Astrocyte of the cerebellum (primary cell): ENCODE measurements at regions of chr17 and their contacts with region 1.

Region 1: GRCh38 chr17:28788100-28788499 is 44.3 kb downstream of the TRAF4 start:
- DNase-seq: no peak
- H3K4me3 ChIP-seq: no peak overlapping the region
- CTCF ChIP-seq: no peak

Region 2: DNA sequence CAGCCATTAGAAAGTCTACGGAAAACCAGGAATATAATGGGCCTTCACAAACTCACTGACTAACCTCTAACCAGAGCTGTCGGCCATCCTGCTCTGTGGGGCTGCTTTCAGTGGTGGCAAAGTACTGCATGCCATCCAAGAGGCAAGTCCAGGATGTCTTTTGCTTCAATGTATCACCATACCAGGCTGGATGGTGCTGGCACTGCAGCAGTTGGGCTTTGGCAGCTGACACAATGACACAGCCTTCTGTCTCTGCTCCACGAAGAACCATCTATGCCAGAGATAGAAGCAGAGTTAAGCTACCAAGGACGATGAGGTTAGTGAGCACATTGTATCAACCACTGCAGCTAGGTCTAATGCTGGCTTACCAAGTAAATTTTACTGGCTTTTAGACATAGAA is 164.4 kb before region 1 on chr17:
- in situ Hi-C with region 1: no loop called
- DNase-seq: no peak
- H3K4me3 ChIP-seq: no peak overlapping the region
- CTCF ChIP-seq: no peak

Region 3: DNA sequence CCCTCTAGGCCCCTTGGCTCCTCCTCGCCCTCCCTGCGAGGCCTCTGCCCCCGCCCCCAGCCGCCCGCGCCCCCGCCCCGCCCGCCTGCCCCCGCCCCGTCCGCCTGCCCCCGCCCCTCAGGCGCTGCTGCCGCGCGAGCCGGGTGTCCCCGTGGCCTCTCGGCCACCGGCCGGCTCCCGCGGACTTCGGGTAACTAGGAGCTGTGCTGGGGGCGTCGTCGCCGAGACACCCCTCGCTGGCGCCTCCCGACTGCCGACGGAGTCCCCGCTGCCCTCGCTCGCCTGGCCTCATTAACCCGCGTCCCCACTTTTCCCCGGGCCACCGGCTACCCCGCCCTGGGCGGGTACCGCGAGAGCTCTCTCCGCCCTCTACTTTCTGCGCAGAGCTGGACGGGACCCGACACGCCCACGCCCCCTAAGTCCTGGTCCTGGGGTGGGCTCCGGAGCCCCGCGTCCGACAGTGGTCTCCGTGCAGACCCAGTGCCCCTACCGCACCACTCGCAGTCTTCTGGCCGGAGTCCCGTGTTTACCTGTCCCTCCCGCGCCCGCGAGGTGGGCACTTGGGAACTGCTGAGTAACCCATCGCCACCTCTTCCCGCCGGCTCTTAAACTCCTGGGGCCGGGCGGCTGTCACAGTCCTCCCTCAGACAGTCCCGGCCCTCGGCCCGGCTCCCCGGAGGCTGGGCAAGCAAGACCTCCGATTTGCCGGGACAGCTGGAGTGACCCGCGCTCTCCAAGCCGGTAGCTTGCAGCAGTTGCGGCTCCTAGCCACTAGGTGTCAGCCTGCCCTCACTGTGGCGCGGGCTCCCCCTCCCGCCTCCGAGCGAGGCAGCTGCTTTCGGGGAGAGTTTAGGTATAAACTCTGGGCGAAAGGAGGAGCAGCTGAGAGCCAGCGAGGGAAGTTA is 61.6 kb before region 1 on chr17 and contains the start of gene TLCD1:
- in situ Hi-C with region 1: loop called (anchors 10 kb)
- DNase-seq: peak; percentile 86
- H3K4me3 ChIP-seq: peak within 1 kb of the TSS; percentile 73
- CTCF ChIP-seq: peak; percentile 98

Region 4: GRCh38 chr17:28744972-28745785 is 42.9 kb before region 1 on chr17:
- in situ Hi-C with region 1: loop called (anchors 5 kb)
- DNase-seq: no peak
- H3K4me3 ChIP-seq: peak overlapping the region; percentile 65
- CTCF ChIP-seq: no peak

Region 5: GRCh38 chr17:28878981-28879380 is 90.9 kb after region 1 on chr17:
- in situ Hi-C with region 1: loop called (anchors 5 kb)
- DNase-seq: peak; percentile 15
- H3K4me3 ChIP-seq: no peak overlapping the region
- CTCF ChIP-seq: peak; percentile 53